A549 (cell line): ENCODE measurements at regions of chr16 and their contacts with region 1.

Region 1: DNA sequence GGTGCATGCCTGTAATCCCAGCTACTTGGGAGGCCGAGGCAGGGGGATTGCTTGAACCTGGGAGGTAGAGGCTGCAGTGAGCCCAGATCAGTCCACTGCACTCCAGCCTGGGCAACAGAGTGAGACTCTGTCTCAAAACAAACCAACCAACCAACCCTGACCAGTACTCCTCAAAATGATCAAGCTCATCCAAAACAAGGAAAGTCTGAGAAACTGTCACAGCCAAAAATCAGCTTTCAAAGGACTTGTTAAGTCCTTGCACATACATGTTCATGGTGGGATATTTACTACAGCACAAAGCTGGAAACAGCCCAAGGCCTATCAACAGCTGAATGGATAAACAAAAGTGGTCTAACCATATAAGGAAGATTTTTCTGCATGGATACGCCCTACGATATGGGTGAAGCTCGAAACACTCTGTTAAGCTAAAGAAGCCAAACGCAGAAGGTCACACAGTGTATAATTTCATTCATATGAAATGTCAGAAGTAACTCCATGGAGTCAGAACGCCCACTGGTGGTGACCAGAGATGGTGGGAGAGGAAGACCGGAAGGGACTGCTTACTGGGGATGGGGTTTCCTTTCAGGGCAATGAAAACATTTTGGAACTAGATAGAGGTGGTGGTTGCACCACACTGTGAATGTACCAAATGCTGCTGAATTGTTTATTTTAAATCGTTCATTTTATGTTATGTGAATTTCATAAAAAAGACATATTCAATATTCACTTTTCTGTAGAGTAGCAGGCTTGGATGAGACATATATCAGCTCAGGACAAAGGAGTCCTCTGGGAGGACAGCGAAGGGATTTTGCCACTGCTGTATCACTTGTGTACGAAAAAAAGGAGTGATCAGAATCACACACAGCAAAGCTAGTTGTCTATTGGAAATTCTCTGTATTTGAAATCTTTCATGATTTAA is 17.7 kb downstream of the CCL17 start:
- DNase-seq: peak; percentile 55 to 72
- ATAC-seq: peak; percentile 67 to 73
- H3K4me3 ChIP-seq: no peak overlapping the region
- H3K27ac ChIP-seq: peak overlapping the region in 1 of 2 experiments; percentile 47; a peak in 3 of 6 replicates
- H3K4me1 ChIP-seq: peaks cover 31% of the 10 kb centered on the region
- CTCF ChIP-seq: peak; percentile 75
- EP300 ChIP-seq: no peak
- POLR2A ChIP-seq: no peak
- RAD21 ChIP-seq: peak; percentile 82 to 86

Region 2: DNA sequence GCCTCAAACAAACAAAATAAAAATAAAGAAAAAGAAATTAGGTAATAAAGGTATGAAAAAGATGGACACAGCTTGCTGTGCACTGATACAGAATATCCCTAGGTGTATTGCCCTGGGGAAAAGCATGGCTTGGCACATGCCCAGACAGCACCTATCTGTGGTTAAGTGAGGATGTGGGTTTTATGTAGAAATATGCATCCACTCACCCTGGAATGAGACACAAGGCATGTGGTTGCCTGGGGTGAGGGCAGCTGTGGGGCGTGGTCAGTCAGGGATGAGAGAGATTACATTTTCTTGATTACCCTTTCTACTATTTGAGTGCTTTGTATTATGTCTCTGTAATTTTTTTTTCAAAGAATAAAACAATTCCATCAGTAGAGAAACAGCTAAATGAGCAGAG is 144.7 kb before region 1 on chr16:
- CTCF ChIA-PET with region 1: interaction called, 15 read pairs
- POLR2A ChIA-PET with region 1: no interaction called
- DNase-seq: peak; percentile 36 to 58
- ATAC-seq: peak; percentile 55 to 58; a peak in 4 of 6 replicates
- H3K4me3 ChIP-seq: no peak overlapping the region
- H3K27ac ChIP-seq: peak overlapping the region in 1 of 2 experiments; percentile 36; a peak in 2 of 6 replicates
- H3K4me1 ChIP-seq: peaks cover 28% of the 10 kb centered on the region
- CTCF ChIP-seq: no peak
- EP300 ChIP-seq: no peak
- POLR2A ChIP-seq: no peak
- RAD21 ChIP-seq: no peak

Region 3: DNA sequence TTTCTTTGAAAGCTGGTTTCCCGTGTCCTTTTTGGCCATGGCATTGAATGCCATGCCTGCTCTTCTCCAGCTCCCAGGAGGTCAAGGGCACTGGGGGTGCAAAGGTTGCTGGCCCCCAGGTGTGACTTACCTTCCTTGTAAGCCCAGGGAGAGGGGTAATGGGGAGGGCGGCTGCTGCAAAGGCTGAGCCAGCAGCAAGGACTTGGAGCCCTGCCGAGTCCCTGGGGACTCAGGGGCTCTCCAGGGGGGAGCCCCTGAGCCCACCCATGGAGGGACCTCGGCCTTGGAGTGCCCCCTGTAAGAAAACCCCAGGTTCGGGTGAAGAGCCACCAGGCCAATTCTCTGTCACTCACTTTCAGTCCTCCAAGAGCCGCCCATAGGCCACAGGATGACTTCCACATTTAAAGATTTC is 69.6 kb before region 1 on chr16:
- CTCF ChIA-PET with region 1: interaction called, 17 read pairs
- POLR2A ChIA-PET with region 1: no interaction called
- DNase-seq: no peak
- ATAC-seq: no peak
- H3K4me3 ChIP-seq: no peak overlapping the region
- H3K27ac ChIP-seq: no peak overlapping the region
- H3K4me1 ChIP-seq: peaks cover 10% of the 10 kb centered on the region; the same call in 2 of the 3 replicates
- CTCF ChIP-seq: no peak
- EP300 ChIP-seq: no peak
- POLR2A ChIP-seq: no peak
- RAD21 ChIP-seq: no peak

Region 4: DNA sequence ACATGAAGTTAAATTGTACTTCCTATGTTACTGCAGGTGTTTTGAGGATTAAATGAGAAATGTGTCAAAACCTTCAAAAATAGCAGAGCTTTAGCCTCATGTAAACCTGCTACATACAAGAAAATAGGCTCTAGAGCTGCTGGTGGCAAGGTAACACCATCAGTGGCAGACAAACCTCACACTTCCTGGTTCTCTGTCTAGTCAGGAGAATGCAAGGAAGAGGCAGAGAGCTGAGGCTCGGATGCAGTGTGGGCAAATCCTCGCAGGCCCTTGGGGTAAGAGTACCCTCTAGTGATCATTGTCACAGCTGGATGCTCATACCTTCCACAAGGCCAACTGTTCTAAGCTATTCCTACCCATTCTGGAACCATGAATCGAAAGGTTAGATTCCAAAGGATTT is 10.7 kb after region 1 on chr16:
- CTCF ChIA-PET with region 1: interaction called, 109 read pairs
- POLR2A ChIA-PET with region 1: no interaction called
- DNase-seq: no peak
- ATAC-seq: no peak
- H3K4me3 ChIP-seq: no peak overlapping the region
- H3K27ac ChIP-seq: no peak overlapping the region
- H3K4me1 ChIP-seq: no peaks in the 10 kb centered on the region
- CTCF ChIP-seq: no peak
- EP300 ChIP-seq: no peak
- POLR2A ChIP-seq: no peak
- RAD21 ChIP-seq: no peak

Region 5: DNA sequence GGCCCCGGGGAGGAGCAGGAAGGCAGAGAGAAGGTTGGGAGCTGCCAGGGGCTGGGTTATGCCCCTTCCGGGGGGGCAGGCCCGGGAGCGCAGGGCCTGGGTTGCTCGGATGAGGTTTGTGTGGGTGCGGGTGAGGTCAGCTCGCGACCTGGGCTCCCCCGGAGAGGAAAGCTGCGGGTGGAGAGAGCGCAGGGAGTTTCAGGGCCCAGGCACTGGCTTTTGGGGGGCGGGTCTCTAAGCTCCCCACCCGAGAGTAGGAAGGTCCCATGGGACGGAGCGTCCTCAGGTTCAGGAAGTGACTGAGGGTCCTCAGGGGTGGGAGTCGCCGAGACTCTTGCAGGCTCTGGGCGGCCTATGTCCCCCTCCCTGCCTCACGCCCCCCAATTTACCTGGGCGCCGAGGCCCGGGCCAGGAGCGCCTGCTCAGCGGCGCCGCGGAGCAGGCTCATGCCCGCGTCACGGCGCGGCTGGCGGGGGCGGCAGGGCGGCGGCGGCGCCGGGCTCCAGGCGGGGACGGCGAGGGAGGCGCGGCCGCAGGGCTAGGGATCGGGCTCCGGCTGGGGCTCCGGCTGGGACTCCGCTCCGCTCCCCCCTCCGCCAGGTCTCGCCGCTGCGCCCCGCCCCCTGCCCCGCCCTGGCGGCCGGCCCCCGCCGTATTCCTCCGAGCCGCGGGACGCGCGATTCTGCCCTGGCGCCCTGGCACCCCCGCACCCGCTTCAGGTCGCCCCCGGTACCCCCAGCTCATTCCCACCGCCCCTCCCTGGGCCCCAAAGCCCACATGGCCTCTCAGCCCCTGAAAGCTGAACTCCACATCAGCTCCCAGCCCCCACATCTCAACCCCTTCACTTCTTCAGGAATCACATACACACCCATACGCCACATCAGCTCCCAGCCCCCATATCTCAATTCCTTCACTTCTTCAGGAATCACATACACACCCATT is 63.9 kb after region 1 on chr16 and contains the start of gene DOK4:
- CTCF ChIA-PET with region 1: interaction called, 16 read pairs
- POLR2A ChIA-PET with region 1: no interaction called
- DNase-seq: peak; percentile 47 to 89
- ATAC-seq: peak; percentile 94 to 96
- H3K4me3 ChIP-seq: peak within 1 kb of the TSS; percentile 100
- H3K27ac ChIP-seq: peak within 1 kb of the TSS; percentile 94 to 98
- H3K4me1 ChIP-seq: peaks cover 45% of the 10 kb centered on the region
- CTCF ChIP-seq: no peak
- EP300 ChIP-seq: no peak
- POLR2A ChIP-seq: peak; percentile 66
- RAD21 ChIP-seq: no peak
- polyA plus RNA-seq, gene DOK4: 85.4 and 93.2 TPM in 2 replicates

Region 6: GRCh38 chr16:57519796-57520360 is 97.6 kb after region 1 on chr16:
- CTCF ChIA-PET with region 1: interaction called, 340 read pairs
- POLR2A ChIA-PET with region 1: no interaction called
- DNase-seq: peak; percentile 68 to 91
- ATAC-seq: peak; percentile 85 to 96
- H3K4me3 ChIP-seq: no peak overlapping the region
- H3K27ac ChIP-seq: peak overlapping the region; percentile 29 to 57; a peak in 3 of 6 replicates
- H3K4me1 ChIP-seq: no peaks in the 10 kb centered on the region
- CTCF ChIP-seq: peak; percentile 98
- EP300 ChIP-seq: no peak
- POLR2A ChIP-seq: no peak
- RAD21 ChIP-seq: peak; percentile 97 to 98

Region 7: DNA sequence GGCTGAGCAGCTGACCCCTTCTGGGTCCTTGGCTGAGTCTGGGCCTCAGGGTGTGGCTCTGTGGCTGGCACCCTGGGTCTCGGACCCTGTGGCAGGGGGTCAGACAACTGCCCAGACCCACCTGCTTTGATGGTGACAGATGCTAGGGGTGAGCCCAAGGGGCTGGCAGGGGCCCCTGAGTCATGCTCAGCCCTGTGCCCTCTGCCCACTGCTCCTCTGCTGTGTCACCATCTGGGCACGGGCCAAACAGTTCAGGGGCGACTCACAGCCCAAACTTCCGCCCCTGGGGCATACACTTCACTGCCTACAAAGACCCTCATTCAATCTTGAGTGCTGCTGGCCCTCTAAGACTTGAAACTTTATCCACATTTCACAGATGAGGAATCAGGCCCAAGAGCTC is 211.9 kb after region 1 on chr16:
- CTCF ChIA-PET with region 1: no interaction called
- POLR2A ChIA-PET with region 1: no interaction called
- DNase-seq: no peak
- ATAC-seq: peak in 1 of 2 experiments; percentile 20; a peak in 2 of 6 replicates
- H3K4me3 ChIP-seq: no peak overlapping the region
- H3K27ac ChIP-seq: peak overlapping the region; percentile 19 to 98
- H3K4me1 ChIP-seq: peaks cover 82% of the 10 kb centered on the region
- CTCF ChIP-seq: no peak
- EP300 ChIP-seq: no peak
- POLR2A ChIP-seq: no peak
- RAD21 ChIP-seq: no peak